ENCODE measurements at regions of chr1 and their contacts with region 1.

Region 1: DNA sequence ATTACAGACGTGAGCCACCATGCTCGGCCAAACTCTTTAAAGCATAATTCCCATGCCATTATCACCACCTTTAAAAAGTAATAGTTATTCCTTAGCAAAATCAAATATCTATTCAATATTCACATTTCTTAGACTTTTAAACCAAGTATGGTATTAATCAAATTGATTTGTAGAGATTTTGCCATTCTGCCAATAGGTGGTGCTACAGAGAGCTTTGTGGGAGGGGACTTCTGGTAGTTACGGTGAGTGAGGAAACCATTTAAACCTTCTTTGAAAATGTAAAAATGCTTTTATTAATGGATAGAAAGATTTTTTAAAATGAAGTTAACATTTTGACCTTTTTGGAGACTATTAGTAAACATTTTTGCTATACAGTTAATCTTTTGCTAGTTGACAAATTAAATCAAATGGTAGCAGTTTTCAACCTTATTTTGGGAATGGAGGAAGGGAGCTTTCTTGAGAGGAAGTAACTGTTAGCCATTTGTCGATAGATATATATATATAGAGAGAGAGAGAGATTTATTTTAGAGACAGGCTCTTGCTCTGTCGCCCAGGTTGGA is 19.3 kb downstream of the IARS2 start:
- DNase-seq: peak; percentile 64
- ATAC-seq: peak; percentile 48; the same call in 1 of the 2 replicates
- H3K4me3 ChIP-seq: no peak overlapping the region
- H3K27ac ChIP-seq: no peak overlapping the region
- H3K4me1 ChIP-seq: no peaks in the 10 kb centered on the region
- H3K27me3 ChIP-seq: no peaks in the 10 kb centered on the region
- CTCF ChIP-seq: peak; percentile 79

Region 2: GRCh38 chr1:219215477-219215876 is 897.7 kb before region 1 on chr1:
- CTCF ChIA-PET with region 1: no interaction called
- POLR2A ChIA-PET with region 1: interaction called, 11 read pairs
- intact Hi-C with region 1: no loop called
- DNase-seq: no peak
- ATAC-seq: no peak
- H3K4me3 ChIP-seq: no peak overlapping the region
- H3K27ac ChIP-seq: no peak overlapping the region
- H3K4me1 ChIP-seq: peaks cover 5% of the 10 kb centered on the region
- H3K27me3 ChIP-seq: no peaks in the 10 kb centered on the region
- CTCF ChIP-seq: no peak

Region 3: GRCh38 chr1:219792337-219793021 is 320.7 kb before region 1 on chr1:
- CTCF ChIA-PET with region 1: no interaction called
- POLR2A ChIA-PET with region 1: no interaction called
- intact Hi-C with region 1: no loop called
- DNase-seq: no peak
- ATAC-seq: no peak
- H3K4me3 ChIP-seq: no peak overlapping the region
- H3K27ac ChIP-seq: no peak overlapping the region
- H3K4me1 ChIP-seq: peaks cover 16% of the 10 kb centered on the region
- H3K27me3 ChIP-seq: no peaks in the 10 kb centered on the region
- CTCF ChIP-seq: no peak

Region 4: GRCh38 chr1:220046052-220046930 is 66.9 kb before region 1 on chr1 and contains the start of gene EPRS1:
- CTCF ChIA-PET with region 1: no interaction called
- POLR2A ChIA-PET with region 1: no interaction called
- intact Hi-C with region 1: loop called (anchors 5 kb)
- DNase-seq: peak; percentile 100
- ATAC-seq: peak; percentile 96
- H3K4me3 ChIP-seq: peak within 1 kb of the TSS; percentile 81
- H3K27ac ChIP-seq: peak within 1 kb of the TSS; percentile 62
- H3K4me1 ChIP-seq: peaks cover 20% of the 10 kb centered on the region
- H3K27me3 ChIP-seq: no peaks in the 10 kb centered on the region
- CTCF ChIP-seq: peak; percentile 58
- total RNA-seq, gene EPRS1: 186 and 226 TPM in 2 replicates

Region 5: GRCh38 chr1:220164116-220164515 is 50.9 kb after region 1 on chr1:
- CTCF ChIA-PET with region 1: interaction called, 10 read pairs
- POLR2A ChIA-PET with region 1: no interaction called
- intact Hi-C with region 1: no loop called
- DNase-seq: no peak
- ATAC-seq: no peak
- H3K4me3 ChIP-seq: no peak overlapping the region
- H3K27ac ChIP-seq: no peak overlapping the region
- H3K4me1 ChIP-seq: no peaks in the 10 kb centered on the region
- H3K27me3 ChIP-seq: no peaks in the 10 kb centered on the region
- CTCF ChIP-seq: no peak